Activated CD4-positive, alpha-beta memory T cell treated with anti-CD3 and anti-CD28 coated beads for 36 hours (primary cell): ENCODE measurements at regions of chr1 and their contacts with region 1.

Region 1: GRCh38 chr1:76330991-76331603 is 256.6 kb downstream of the ST6GALNAC3 start:
- DNase-seq: peak; percentile 46
- H3K4me3 Mint-ChIP-seq: no peak overlapping the region
- H3K27ac Mint-ChIP-seq: no peak overlapping the region
- H3K4me1 Mint-ChIP-seq: peaks cover 7% of the 10 kb centered on the region
- H3K27me3 Mint-ChIP-seq: no peaks in the 10 kb centered on the region

Region 2: DNA sequence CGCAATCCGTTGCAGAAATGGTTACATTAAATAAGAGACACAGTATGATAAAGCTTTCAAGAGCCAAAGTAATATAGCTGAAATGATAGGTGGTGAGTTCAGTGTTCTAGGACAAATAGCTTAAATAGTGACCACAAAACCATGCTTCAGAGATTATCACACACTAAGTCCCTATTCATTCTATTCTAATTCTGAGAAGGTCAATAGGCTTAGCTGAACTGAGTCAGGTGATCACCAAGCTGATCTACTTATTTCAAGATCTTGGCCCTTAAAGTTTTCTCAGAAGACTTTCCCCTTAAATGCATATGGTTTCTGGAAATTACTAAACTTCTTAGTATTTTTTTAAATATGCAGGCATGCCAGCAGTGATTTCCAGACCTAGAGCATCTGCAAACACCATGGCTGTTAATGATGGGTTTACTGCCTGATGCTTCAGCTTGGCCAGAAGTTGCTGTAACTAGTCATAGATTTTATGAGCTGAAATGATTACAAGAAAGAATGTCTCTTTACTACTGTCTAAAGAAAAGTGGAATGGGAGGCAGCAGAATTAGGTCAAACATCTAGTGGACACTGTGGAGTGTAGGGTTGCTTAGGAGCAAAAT is 13.7 kb before region 1 on chr1:
- CTCF ChIA-PET with region 1: interaction called, 10 read pairs
- POLR2A ChIA-PET with region 1: no interaction called
- intact Hi-C with region 1: no loop called
- DNase-seq: no peak
- H3K4me3 Mint-ChIP-seq: no peak overlapping the region
- H3K27ac Mint-ChIP-seq: no peak overlapping the region
- H3K4me1 Mint-ChIP-seq: no peaks in the 10 kb centered on the region
- H3K27me3 Mint-ChIP-seq: no peaks in the 10 kb centered on the region

Region 3: GRCh38 chr1:77126307-77126706 is 795.2 kb after region 1 on chr1:
- CTCF ChIA-PET with region 1: no interaction called
- POLR2A ChIA-PET with region 1: no interaction called
- intact Hi-C with region 1: loop called (anchors 5 kb)
- DNase-seq: no peak
- H3K4me3 Mint-ChIP-seq: no peak overlapping the region
- H3K27ac Mint-ChIP-seq: no peak overlapping the region
- H3K4me1 Mint-ChIP-seq: no peaks in the 10 kb centered on the region
- H3K27me3 Mint-ChIP-seq: no peaks in the 10 kb centered on the region